ENCODE measurements at regions of chr12 and their contacts with region 1.

Region 1: DNA sequence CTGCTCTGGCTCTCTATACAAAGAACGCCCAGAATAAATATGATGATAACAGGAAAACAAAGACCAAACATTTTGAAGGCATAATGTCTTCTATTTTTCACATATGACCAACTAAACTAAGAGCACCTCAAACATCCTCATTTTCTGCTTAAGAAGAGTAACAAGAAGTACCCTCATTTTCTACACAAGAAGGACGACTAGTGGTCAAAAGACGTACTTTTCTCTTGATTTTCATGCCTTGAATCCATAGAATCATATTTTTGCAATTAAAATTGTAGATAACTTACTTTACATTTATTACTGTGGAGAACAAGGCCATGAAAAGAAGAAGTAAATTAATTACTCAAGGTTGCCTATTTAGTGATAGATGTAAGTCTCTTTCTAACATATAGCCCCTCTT is 358.6 kb downstream of the DUSP6 start:
- DNase-seq: peak in 1 of 2 experiments; percentile 68
- H3K4me3 ChIP-seq: no peak overlapping the region
- H3K4me1 ChIP-seq: no peaks in the 10 kb centered on the region
- H3K27me3 ChIP-seq: no peaks in the 10 kb centered on the region

Region 2: GRCh38 chr12:88141770-88142609 is 851.7 kb before region 1 on chr12 and contains the starts of genes CEP290 and TMTC3:
- in situ Hi-C with region 1: loop called (anchors 25 kb)
- DNase-seq: peak; percentile 94 to 97
- H3K4me3 ChIP-seq: peak within 1 kb of the TSS; percentile 80
- H3K4me1 ChIP-seq: peaks cover 28% of the 10 kb centered on the region
- H3K27me3 ChIP-seq: no peaks in the 10 kb centered on the region

Region 3: GRCh38 chr12:88580051-88580871 is 413.4 kb before region 1 on chr12 and contains the start of gene KITLG:
- in situ Hi-C with region 1: loop called (anchors 25 kb)
- DNase-seq: peak; percentile 83 to 90
- H3K4me3 ChIP-seq: peak within 1 kb of the TSS; percentile 63
- H3K4me1 ChIP-seq: peaks cover 37% of the 10 kb centered on the region
- H3K27me3 ChIP-seq: no peaks in the 10 kb centered on the region

Region 4: DNA sequence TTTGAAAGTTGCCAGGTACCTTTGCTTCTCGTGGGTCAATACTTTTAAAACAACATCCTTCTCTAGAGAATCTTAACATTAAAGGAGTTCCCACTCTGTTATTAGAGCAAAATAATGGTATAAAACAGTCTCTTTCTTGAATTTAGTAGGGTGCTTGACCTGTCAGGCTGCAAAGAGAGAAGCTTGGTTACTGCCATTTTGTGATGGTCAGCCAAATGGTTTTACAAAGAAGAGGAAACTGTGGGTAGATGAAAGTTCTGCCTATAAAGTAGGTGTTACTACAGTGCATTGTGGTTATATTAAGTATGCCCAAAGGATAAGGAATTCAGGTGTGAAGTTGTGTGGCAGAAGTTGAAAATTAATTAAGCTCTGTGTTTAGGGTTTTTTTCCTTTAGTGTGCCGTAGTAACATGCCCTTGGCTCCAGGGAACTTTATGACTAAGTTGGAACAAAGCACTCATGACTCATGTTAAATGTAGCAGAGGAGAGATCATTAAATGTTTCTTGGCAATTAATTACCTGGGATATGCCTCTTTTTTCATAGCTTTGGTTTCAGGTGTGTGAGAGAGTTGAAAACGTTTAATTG is 59.4 kb before region 1 on chr12:
- in situ Hi-C with region 1: no loop called
- DNase-seq: no peak
- H3K4me3 ChIP-seq: no peak overlapping the region
- H3K4me1 ChIP-seq: peaks cover 32% of the 10 kb centered on the region
- H3K27me3 ChIP-seq: no peaks in the 10 kb centered on the region

Measured in HAP-1 (cell line).